ENCODE measurements at regions of chr1 and their contacts with region 1.

Region 1: GRCh38 chr1:165144757-165145397 is 211.6 kb downstream of the LMX1A start:
- DNase-seq: peak; percentile 47
- ATAC-seq: peak; percentile 95
- H3K4me3 ChIP-seq: no peak overlapping the region
- H3K27ac ChIP-seq: no peak overlapping the region
- H3K4me1 ChIP-seq: no peaks in the 10 kb centered on the region
- H3K27me3 ChIP-seq: peaks cover 5% of the 10 kb centered on the region; the same call in 1 of the 2 replicates
- CTCF ChIP-seq: peak; percentile 67 to 83 (median 80)
- POLR2A ChIP-seq: no peak
- RAD21 ChIP-seq: peak; percentile 67

Region 2: DNA sequence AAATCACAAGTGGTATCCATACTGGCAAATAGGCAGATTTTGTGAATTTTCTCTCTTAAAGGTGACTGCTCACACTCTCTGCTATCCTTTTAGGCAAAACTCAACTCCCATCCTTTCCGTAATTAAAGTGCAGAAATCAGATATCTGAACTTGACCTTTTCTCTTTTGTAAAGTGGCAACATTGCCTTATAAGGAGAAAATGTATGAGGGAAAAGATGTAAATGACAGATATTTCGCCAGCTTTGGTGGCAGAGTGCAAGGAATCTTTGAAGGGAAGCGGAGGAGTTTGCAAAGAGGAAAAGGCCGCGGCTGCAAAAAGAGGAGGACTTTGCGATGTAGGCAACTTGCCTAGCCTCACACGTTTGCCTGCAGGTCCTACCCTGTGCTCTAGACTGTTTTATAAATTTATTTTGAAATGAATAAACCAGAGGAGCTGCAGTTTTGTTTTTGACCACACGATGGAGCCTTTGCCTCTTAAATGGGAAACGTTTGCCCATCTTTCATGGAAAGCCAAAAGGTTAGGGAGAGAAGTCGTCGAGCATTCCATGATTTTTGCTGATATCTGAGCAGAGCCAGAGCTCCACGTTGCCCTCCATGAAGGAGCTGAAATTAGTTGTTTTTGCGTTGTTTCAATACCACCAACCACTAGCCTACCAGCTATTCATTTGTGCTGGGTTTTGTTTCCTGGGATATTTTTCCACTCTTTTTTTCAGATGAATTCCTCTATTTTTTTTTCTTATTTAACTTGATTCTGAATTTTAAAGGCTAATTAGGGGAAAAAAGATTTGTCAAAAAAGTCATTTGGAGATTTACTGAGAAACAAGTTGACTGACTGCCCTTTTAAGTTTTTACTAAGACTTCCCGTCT is 30.6 kb before region 1 on chr1:
- CTCF ChIA-PET with region 1: interaction called, 8 read pairs
- POLR2A ChIA-PET with region 1: no interaction called
- RAD21 ChIA-PET with region 1: no interaction called
- intact Hi-C with region 1: loop called (anchors 2 kb)
- DNase-seq: peak; percentile 44
- ATAC-seq: peak; percentile 74
- H3K4me3 ChIP-seq: no peak overlapping the region
- H3K27ac ChIP-seq: no peak overlapping the region
- H3K4me1 ChIP-seq: peaks cover 0 to 13% of the 10 kb centered on the region in 2 experiments; a peak in 2 of 4 replicates
- H3K27me3 ChIP-seq: peaks cover 16% of the 10 kb centered on the region
- CTCF ChIP-seq: peak; percentile 65 to 79 (median 67)
- POLR2A ChIP-seq: no peak
- RAD21 ChIP-seq: peak; percentile 82

Region 3: DNA sequence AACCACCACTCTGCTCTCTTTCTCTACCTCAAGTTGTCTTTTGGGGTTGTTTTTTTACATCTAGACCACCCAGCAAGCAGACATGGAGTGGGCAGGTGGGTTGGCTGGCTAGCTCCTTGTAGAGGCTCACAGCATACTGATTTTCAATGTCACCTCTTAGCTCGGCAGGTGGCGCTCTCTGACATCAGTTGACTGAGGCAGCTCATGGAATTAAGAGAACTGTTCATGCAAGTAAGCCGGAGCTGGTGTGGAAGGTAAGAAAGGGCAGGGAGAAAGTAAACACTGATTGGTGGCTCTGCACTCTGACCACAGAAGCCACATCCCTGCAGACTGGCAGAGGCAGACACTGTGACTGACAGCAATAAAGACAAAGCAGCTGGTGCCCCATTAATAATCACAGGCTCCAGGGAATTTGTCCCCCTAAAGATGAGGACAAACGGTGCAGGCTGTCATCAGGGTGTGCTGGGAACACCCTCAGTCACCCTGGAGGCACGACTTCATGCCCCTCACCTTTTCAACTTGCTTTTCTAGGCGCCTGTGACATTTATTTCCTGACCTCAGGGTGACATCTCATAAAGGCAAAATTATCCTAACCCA is 15.2 kb before region 1 on chr1:
- CTCF ChIA-PET with region 1: interaction called, 13 read pairs
- POLR2A ChIA-PET with region 1: no interaction called
- RAD21 ChIA-PET with region 1: no interaction called
- intact Hi-C with region 1: no loop called
- DNase-seq: peak; percentile 51
- ATAC-seq: peak; percentile 95
- H3K4me3 ChIP-seq: no peak overlapping the region
- H3K27ac ChIP-seq: no peak overlapping the region
- H3K4me1 ChIP-seq: no peaks in the 10 kb centered on the region
- H3K27me3 ChIP-seq: peaks cover 73% of the 10 kb centered on the region
- CTCF ChIP-seq: peak; percentile 54 to 79 (median 75); a peak in 5 of 6 replicates
- POLR2A ChIP-seq: no peak
- RAD21 ChIP-seq: peak; percentile 62

Measured in HCT116 (cell line).